Ascending aorta (tissue), 2 donors: ENCODE measurements at regions of chr7 and their contacts with region 1.

Region 1: DNA sequence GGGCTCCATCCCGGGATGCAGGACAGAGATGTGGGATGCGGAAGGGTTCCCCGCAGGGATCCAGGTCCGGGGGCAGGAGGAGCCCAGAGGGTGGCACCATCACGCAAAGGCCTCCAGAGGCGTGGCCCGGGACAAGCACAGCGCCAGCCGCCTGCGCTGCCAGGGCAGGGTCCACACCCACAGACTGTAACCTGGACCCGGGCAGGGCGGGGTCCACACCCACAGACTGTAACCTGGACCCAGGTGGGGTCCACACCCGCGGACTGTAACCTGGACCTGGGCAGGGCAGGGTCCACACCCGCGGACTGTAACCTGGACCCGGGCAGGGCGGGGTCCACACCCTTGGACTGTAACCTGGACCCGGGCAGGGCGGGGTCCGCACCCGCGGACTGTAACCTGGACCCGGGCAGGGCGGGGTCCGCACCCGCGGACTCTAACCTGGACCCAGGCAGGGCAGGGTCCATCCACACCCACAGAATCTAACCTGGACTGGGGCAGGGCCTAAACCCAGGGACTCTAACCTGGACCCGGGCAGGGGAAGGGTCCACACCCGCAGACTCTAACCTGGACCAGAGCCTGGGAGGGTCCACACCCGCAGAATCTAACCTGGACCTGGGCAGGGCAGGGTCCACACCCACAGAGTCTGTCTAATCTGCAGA is 37.5 kb upstream of the SUN1 start:
- DNase-seq: no peak
- H3K4me3 ChIP-seq: no peak overlapping the region
- H3K27ac ChIP-seq: no peak overlapping the region
- H3K4me1 ChIP-seq: peaks cover 5 to 18% of the 10 kb centered on the region in 2 donors
- H3K27me3 ChIP-seq: no peaks in the 10 kb centered on the region
- CTCF ChIP-seq: no peak

Region 2: DNA sequence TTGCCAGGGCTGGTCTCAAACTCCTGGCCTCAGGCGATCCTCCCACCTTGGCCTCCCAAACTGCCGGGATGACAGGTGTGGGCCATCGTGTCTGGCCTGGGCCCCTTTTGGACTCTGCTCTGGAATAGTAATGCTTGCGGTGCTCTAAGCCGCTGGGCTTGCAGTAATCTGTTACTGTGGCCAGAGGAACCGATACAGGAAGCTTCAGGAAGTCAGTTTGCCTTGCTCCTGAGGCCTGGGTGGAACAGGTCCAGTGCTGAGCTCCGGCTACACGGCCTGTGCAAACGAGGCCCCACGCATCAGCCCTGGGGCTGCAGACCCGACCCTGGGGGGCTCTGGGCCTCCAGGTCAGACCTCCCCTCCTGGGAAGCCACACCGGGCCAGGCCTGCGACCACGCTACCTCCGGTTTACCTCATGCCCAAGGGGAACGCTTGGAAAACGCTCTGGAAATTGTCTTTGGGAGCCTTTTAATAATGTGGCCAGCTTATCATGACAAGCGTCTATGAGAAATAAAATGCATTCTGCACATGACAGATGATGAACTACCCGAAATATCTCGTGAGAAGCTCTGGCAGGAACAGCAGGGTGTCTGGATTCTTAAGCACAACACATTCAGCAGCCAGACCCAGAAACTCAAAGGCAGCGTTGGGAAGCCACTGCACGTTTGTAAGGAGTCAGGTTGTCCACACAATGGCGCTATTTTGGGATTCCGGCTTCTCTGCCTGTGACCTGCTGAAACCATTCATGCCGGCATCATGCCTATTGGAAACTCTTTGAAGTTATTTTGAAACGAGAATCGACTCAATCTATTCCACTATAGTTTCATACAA is 169.8 kb after region 1 on chr7:
- intact Hi-C with region 1: loop called (anchors 10 kb)
- DNase-seq: peak; percentile 30 to 86
- H3K4me3 ChIP-seq: peak overlapping the region in 1 of 2 donors; percentile 32
- H3K27ac ChIP-seq: peak overlapping the region; percentile 81 to 87
- H3K4me1 ChIP-seq: peaks cover 17 to 28% of the 10 kb centered on the region in 2 donors
- H3K27me3 ChIP-seq: no peaks in the 10 kb centered on the region
- CTCF ChIP-seq: peak; percentile 26 to 58 (median 42)